OCI-LY7 (cell line): ENCODE measurements at regions of chr12 and their contacts with region 1.

Region 1: GRCh38 chr12:105420659-105421240 is 90.3 kb downstream of the C12orf75 start:
- DNase-seq: peak; percentile 68
- H3K4me3 ChIP-seq: no peak overlapping the region
- H3K27ac ChIP-seq: no peak overlapping the region
- H3K4me1 ChIP-seq: no peaks in the 10 kb centered on the region
- CTCF ChIP-seq: peak; percentile 99

Region 2: GRCh38 chr12:106136263-106136662 is 715.5 kb after region 1 on chr12:
- CTCF ChIA-PET with region 1: interaction called, 3 read pairs
- POLR2A ChIA-PET with region 1: no interaction called
- intact Hi-C with region 1: loop called (anchors 1 kb)
- DNase-seq: peak; percentile 68
- H3K4me3 ChIP-seq: no peak overlapping the region
- H3K27ac ChIP-seq: no peak overlapping the region
- H3K4me1 ChIP-seq: no peaks in the 10 kb centered on the region
- CTCF ChIP-seq: peak; percentile 95

Region 3: GRCh38 chr12:106223485-106224354 is 803.0 kb after region 1 on chr12:
- CTCF ChIA-PET with region 1: no interaction called
- POLR2A ChIA-PET with region 1: no interaction called
- intact Hi-C with region 1: loop called (anchors 2 kb)
- DNase-seq: peak; percentile 69
- H3K4me3 ChIP-seq: no peak overlapping the region
- H3K27ac ChIP-seq: no peak overlapping the region
- H3K4me1 ChIP-seq: peaks cover 11% of the 10 kb centered on the region
- CTCF ChIP-seq: peak; percentile 95